ENCODE measurements at regions of chr13 and their contacts with region 1.

Region 1: DNA sequence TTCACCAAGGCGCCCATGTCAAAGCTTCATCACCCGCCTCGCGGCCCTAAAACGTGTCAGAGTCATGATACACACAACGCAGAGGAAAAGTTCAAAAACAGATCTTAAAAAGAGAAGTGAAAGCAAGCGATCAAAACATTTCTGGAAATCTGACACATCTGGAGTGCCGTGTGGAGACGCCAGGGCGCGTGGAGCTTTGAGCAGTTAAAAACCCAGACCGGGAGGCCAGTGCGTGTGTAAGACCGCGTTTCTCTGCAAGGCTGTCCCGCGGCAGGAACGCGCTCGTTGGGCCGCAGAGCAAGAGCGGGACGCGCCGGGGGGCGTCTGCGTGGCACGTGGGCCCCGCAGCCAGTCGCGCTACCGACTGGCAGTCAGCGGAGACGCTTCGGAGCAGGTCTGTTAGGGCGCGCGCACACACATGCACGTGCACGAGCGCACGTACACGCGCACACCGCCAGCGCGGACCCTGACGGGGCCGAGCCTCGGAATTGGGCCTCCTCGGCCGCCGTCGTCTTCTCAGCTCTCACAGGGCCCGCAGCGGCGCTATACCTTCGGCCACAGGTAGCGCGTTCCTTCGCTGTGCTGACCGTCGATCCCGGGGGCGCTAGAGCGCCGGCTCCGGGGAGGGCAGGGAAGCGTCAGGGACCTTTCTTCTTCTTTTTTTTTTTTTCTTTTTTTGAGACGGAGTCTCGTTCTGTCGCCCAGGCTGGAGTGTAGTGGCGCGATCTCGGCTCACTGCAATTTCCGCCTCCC is 35.8 kb downstream of the RNF6 start:
- DNase-seq: peak; percentile 71 to 83
- ATAC-seq: peak; percentile 85 to 87
- H3K4me3 ChIP-seq: peak overlapping the region; percentile 67 to 86 (median 80)
- H3K27ac ChIP-seq: peak overlapping the region; percentile 73 to 86 (median 80)
- H3K4me1 ChIP-seq: peaks cover 0 to 7% of the 10 kb centered on the region in 2 donors
- H3K27me3 ChIP-seq: no peaks in the 10 kb centered on the region
- CTCF ChIP-seq: peak in 4 of 5 experiments; percentile 29 to 61 (median 44)
- POLR2A ChIP-seq: no peak

Region 2: GRCh38 chr13:26253787-26254582 is 67.7 kb after region 1 on chr13 and contains the start of gene CDK8:
- in situ Hi-C with region 1: no loop called
- intact Hi-C with region 1: loop called (anchors 5 kb)
- DNase-seq: peak; percentile 83 to 94
- ATAC-seq: peak; percentile 90 to 93
- H3K4me3 ChIP-seq: peak within 1 kb of the TSS; percentile 78 to 91 (median 88)
- H3K27ac ChIP-seq: peak within 1 kb of the TSS; percentile 89 to 95 (median 93)
- H3K4me1 ChIP-seq: peaks cover 25 to 35% of the 10 kb centered on the region in 2 donors
- H3K27me3 ChIP-seq: no peaks in the 10 kb centered on the region
- CTCF ChIP-seq: no peak
- POLR2A ChIP-seq: peak; percentile 74 to 81
- total RNA-seq, gene CDK8: 9.4 to 11.0 (median 10.3) TPM

Region 3: GRCh38 chr13:26377038-26377437 is 190.7 kb after region 1 on chr13:
- in situ Hi-C with region 1: no loop called
- intact Hi-C with region 1: loop called (anchors 5 kb)
- DNase-seq: no peak
- ATAC-seq: peak; percentile 46 to 50
- H3K4me3 ChIP-seq: no peak overlapping the region
- H3K27ac ChIP-seq: no peak overlapping the region
- H3K4me1 ChIP-seq: peaks cover 3 to 18% of the 10 kb centered on the region in 2 donors
- H3K27me3 ChIP-seq: no peaks in the 10 kb centered on the region
- CTCF ChIP-seq: peak in 2 of 5 experiments; percentile 16 to 29
- POLR2A ChIP-seq: no peak

Region 4: DNA sequence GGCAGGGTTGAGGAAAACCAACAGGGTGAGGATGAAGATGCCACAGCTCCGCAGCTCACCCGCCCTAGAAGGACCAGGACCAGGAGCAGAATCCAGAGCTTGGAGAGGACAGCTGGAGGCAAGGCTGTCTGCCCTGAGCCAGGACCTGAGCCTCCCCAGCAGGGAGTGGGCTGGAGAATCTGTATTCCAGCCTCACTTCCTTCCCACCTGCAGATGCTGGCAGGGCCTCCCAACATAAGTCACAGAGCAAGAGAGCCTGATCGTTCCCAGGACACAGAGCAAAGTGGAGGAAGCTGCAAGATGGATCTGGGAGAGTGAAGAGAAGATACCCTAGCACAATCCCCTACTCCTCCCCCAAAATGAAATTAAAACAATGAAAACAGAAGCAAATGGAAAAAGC is 309.5 kb after region 1 on chr13:
- in situ Hi-C with region 1: loop called in 3 of 4 experiments (anchors 5 to 10 kb)
- intact Hi-C with region 1: loop called (anchors 1 kb)
- DNase-seq: no peak
- ATAC-seq: no peak
- H3K4me3 ChIP-seq: no peak overlapping the region
- H3K27ac ChIP-seq: no peak overlapping the region
- H3K4me1 ChIP-seq: no peaks in the 10 kb centered on the region
- H3K27me3 ChIP-seq: no peaks in the 10 kb centered on the region
- CTCF ChIP-seq: no peak
- POLR2A ChIP-seq: no peak

Region 5: GRCh38 chr13:26557393-26558023 is 371.2 kb after region 1 on chr13 and contains the start of gene WASF3:
- in situ Hi-C with region 1: no loop called
- intact Hi-C with region 1: loop called (anchors 1 kb)
- DNase-seq: peak; percentile 90 to 92
- ATAC-seq: peak; percentile 92 to 93
- H3K4me3 ChIP-seq: peak within 1 kb of the TSS; percentile 60 to 73 (median 70)
- H3K27ac ChIP-seq: peak within 1 kb of the TSS; percentile 9 to 69 (median 57)
- H3K4me1 ChIP-seq: peaks cover 0 to 12% of the 10 kb centered on the region in 2 donors
- H3K27me3 ChIP-seq: peaks cover 0 to 3% (median 0%) of the 10 kb centered on the region in 3 donors
- CTCF ChIP-seq: no peak
- POLR2A ChIP-seq: peak; percentile 55 to 60
- total RNA-seq, gene WASF3: 5.4 to 11.6 (median 7.6) TPM

Region 6: GRCh38 chr13:26881178-26881577 is 694.9 kb after region 1 on chr13:
- in situ Hi-C with region 1: loop called in 1 of 4 experiments (anchors 25 kb)
- intact Hi-C with region 1: no loop called
- DNase-seq: no peak
- ATAC-seq: no peak
- H3K4me3 ChIP-seq: no peak overlapping the region
- H3K27ac ChIP-seq: no peak overlapping the region
- H3K4me1 ChIP-seq: no peaks in the 10 kb centered on the region
- H3K27me3 ChIP-seq: no peaks in the 10 kb centered on the region
- CTCF ChIP-seq: no peak
- POLR2A ChIP-seq: no peak

Region 7: GRCh38 chr13:27226991-27227390 is 1040.7 kb after region 1 on chr13:
- in situ Hi-C with region 1: no loop called
- intact Hi-C with region 1: no loop called
- DNase-seq: no peak
- ATAC-seq: no peak
- H3K4me3 ChIP-seq: no peak overlapping the region
- H3K27ac ChIP-seq: no peak overlapping the region
- H3K4me1 ChIP-seq: no peaks in the 10 kb centered on the region
- H3K27me3 ChIP-seq: no peaks in the 10 kb centered on the region
- CTCF ChIP-seq: no peak
- POLR2A ChIP-seq: no peak